Transverse colon (tissue), 4 donors: ENCODE measurements at regions of chr6 and their contacts with region 1.

Region 1: DNA sequence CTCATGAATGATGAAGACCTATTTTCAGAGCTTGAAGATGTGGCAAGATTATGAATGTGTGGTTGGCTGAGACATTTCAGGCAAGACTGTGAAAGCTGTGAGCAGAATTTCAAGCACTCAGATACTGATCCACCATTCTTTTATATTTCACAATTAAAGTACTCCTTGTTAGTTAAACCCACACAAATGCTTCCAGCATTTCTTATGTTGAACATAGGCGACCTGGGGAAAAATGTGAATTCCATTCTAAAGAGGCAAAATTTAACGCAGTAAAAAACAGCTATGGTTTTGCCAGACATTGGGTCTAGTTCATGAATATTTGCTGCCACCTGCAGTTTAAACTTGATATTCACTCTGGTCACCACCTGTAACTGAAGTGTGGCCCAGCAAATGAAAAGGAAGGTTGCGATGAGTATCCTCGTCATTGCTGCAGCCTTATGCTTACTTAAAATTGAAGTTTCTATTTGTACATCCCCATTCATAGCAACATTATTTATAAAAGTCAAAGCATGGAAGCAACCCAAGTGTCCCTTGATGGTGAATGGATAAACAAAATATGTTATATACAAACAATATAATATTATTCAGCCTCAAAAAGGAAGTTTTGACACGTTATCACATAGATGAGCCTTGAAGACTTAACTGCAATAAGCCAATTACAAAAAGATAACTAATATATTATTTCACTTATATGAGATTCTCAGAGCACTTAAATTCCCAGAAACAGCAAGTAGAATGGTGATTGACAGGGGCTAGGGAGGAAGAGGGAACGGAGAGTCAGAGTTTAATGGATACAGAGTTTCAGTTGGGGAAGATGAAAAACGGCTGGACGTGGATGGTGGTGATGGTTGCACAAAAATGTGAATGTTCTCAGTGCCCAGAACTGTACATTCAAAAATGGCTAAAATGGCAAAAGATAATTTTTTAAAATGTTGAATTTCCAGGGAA is 32.4 kb upstream of the FAM184A start:
- DNase-seq: peak; percentile 14
- H3K4me3 ChIP-seq: no peak overlapping the region
- H3K27ac ChIP-seq: no peak overlapping the region
- H3K4me1 ChIP-seq: peaks cover 0 to 8% (median 0%) of the 10 kb centered on the region in 4 donors
- H3K27me3 ChIP-seq: no peaks in the 10 kb centered on the region
- CTCF ChIP-seq: peak; percentile 49 to 70 (median 57)
- EP300 ChIP-seq: no peak
- POLR2A ChIP-seq: no peak

Region 2: GRCh38 chr6:118968416-118968815 is 142.5 kb before region 1 on chr6:
- in situ Hi-C with region 1: loop called (anchors 10 kb)
- intact Hi-C with region 1: loop called (anchors 5 kb)
- DNase-seq: no peak
- H3K4me3 ChIP-seq: no peak overlapping the region
- H3K27ac ChIP-seq: no peak overlapping the region
- H3K4me1 ChIP-seq: no peaks in the 10 kb centered on the region
- H3K27me3 ChIP-seq: no peaks in the 10 kb centered on the region
- CTCF ChIP-seq: peak in 4 of 5 experiments; percentile 26 to 42 (median 34)
- EP300 ChIP-seq: no peak
- POLR2A ChIP-seq: no peak